ENCODE measurements at regions of chr7 and their contacts with region 1.

Region 1: DNA sequence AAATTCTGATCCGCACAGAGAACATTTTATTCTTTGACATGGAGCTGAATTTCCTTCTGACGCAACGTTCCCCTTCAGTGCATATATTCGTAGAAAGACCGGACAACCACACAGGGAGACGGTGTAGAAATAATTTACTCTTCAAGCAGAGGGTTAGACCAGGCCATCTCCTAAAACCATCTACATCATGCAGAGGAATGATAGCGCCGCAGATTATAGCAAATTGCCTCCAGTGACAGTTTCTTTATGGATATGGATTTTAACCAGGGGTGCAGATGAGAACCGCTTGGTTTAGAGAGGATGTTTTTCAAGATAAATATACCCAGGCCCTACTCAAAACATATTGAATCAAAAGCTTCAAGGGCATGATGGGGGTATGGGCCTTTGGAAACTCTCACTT is 759.3 kb upstream of the AUTS2 start:
- DNase-seq: no peak
- H3K4me3 ChIP-seq: no peak overlapping the region
- CTCF ChIP-seq: no peak

Region 2: DNA sequence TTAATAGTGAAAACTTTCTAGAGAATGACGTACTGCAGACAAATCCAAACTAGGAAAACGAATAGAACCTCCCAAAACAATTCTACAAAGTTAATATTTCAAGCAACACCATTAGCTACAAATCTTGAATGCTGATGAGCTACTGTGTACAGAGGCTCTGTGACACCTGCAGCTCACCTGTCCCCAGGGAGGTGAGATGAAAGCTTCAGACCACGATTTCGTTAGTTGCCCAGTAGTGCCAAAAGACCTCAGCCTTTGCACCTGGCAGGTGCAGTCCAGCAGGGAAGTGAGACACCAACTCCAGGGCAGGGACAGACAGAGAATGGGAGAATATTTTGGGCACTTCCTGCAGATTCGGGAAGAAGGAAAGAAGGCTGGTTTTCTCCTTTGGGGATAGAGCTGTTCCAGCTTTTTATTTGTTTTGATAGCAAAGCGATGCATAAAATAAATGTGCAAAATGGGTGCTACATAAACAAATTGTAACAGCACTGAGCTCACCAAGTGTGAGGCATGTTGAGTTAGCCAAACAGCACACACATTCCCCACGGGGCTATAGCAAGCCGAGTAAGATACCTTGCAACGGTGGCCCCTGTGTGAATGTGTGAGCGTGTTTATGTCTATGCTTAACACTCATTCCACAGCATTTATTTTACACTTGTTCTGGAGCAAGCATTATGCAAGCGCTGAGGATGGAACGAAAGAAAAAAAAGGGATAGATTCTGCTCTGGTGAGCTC is 265.6 kb before region 1 on chr7:
- in situ Hi-C with region 1: no loop called
- DNase-seq: no peak
- H3K4me3 ChIP-seq: no peak overlapping the region
- CTCF ChIP-seq: no peak

Region 3: GRCh38 chr7:68642727-68643126 is 196.3 kb before region 1 on chr7:
- in situ Hi-C with region 1: no loop called
- DNase-seq: no peak
- H3K4me3 ChIP-seq: no peak overlapping the region
- CTCF ChIP-seq: no peak

Region 4: GRCh38 chr7:68744042-68744441 is 95.0 kb before region 1 on chr7:
- in situ Hi-C with region 1: loop called (anchors 5 kb)
- DNase-seq: no peak
- H3K4me3 ChIP-seq: no peak overlapping the region
- CTCF ChIP-seq: no peak